Natural killer cell (primary cell): ENCODE measurements at regions of chrX and their contacts with region 1.

Region 1: DNA sequence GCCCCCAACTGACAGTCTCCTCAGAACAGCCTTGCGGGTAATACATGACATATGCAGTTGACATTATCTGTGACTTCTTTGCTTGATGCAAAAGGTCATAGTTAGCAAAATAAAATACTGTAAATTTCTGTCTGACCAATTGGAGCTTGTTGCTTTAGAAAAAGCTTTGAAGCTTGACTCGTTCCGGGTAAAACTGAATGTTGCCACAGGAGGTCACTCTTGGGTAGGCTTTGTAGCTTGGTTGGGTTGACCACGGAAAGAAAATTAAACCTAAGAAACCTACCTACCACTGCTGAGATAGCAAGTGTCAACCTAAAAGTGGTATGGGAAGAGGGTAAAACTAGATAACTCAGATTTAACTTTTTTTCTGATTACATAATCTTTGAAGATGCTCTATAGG is 23.2 kb downstream of the PRPS2 start:
- DNase-seq: peak in 1 of 2 donors; percentile 64
- ATAC-seq: peak; percentile 62 to 78 (median 65)
- H3K4me3 ChIP-seq: no peak overlapping the region
- H3K4me3 Mint-ChIP-seq: no peak overlapping the region
- H3K27ac ChIP-seq: no peak overlapping the region
- H3K27ac Mint-ChIP-seq: no peak overlapping the region
- H3K4me1 ChIP-seq: no peaks in the 10 kb centered on the region
- H3K4me1 Mint-ChIP-seq: peaks cover 5% of the 10 kb centered on the region in 2 donors
- H3K27me3 ChIP-seq: no peaks in the 10 kb centered on the region
- H3K27me3 Mint-ChIP-seq: no peaks in the 10 kb centered on the region
- CTCF ChIP-seq: peak; percentile 48

Region 2: GRCh38 chrX:12497832-12498591 is 316.4 kb before region 1 on chrX:
- intact Hi-C with region 1: no loop called
- DNase-seq: no peak
- ATAC-seq: no peak
- H3K4me3 ChIP-seq: no peak overlapping the region
- H3K4me3 Mint-ChIP-seq: no peak overlapping the region
- H3K27ac ChIP-seq: no peak overlapping the region
- H3K27ac Mint-ChIP-seq: no peak overlapping the region
- H3K4me1 ChIP-seq: no peaks in the 10 kb centered on the region
- H3K4me1 Mint-ChIP-seq: no peaks in the 10 kb centered on the region
- H3K27me3 ChIP-seq: no peaks in the 10 kb centered on the region
- H3K27me3 Mint-ChIP-seq: no peaks in the 10 kb centered on the region
- CTCF ChIP-seq: no peak

Region 3: DNA sequence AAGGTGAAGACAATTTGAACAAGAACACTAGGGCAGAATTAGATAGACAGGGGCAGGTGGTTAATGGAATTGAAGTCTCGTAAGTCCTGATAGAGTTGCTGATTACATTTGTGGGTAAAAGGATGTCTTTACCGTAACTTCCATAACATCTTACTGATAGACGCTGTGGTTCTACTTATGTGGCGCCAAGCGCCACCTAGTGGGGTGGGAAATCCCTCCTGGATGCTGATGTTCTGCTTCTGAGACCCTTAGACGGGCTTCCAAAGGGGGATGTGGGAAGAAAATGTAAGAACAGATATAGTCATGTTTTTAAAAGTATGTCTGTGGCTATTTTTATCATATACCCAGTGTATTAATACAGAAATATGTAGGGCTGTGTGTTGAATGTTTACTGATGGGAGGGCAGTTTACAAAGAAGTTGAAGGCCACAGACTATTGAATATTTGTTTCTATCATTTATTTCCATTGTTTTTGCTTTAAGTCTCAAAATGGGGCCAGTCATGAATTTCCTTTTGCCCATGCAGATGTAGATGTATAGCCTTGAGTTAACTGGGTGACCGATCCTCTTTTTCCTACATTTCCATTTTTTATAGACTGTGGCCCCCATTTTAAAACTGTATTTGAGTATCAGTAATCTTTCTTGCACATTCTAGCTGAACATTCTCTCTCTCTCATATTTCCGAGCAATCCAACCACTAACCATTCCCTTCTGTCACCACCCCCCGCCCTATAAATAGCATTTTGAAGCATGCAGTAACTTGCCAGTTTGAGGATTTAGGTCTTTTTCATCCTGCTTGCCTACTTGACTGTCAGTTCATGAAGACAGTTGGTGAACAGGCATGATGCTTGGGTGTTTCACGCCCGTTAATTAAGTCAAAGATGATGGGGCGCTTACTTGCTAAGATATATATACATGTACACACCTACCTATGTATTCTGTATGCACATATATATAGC is 79.9 kb after region 1 on chrX:
- intact Hi-C with region 1: loop called (anchors 1 kb)
- DNase-seq: peak; percentile 19 to 71
- ATAC-seq: peak in 2 of 3 donors; percentile 62 to 71
- H3K4me3 ChIP-seq: no peak overlapping the region
- H3K4me3 Mint-ChIP-seq: no peak overlapping the region
- H3K27ac ChIP-seq: no peak overlapping the region
- H3K27ac Mint-ChIP-seq: no peak overlapping the region
- H3K4me1 ChIP-seq: peaks cover 27% of the 10 kb centered on the region
- H3K4me1 Mint-ChIP-seq: peaks cover 26 to 29% of the 10 kb centered on the region in 2 donors
- H3K27me3 ChIP-seq: no peaks in the 10 kb centered on the region
- H3K27me3 Mint-ChIP-seq: peaks cover 0 to 19% of the 10 kb centered on the region in 2 donors
- CTCF ChIP-seq: peak; percentile 67